Common myeloid progenitor, CD34-positive (primary cell): ENCODE measurements at regions of chr18 and their contacts with region 1.

Region 1: GRCh38 chr18:11518788-11519685 is 90.4 kb upstream of the SLC35G4 start:
- DNase-seq: peak; percentile 61 to 80 (median 79)
- H3K4me3 ChIP-seq: no peak overlapping the region
- H3K27ac ChIP-seq: no peak overlapping the region
- H3K4me1 ChIP-seq: no peaks in the 10 kb centered on the region
- H3K27me3 ChIP-seq: peaks cover 0 to 5% (median 0%) of the 10 kb centered on the region in 5 experiments

Region 2: DNA sequence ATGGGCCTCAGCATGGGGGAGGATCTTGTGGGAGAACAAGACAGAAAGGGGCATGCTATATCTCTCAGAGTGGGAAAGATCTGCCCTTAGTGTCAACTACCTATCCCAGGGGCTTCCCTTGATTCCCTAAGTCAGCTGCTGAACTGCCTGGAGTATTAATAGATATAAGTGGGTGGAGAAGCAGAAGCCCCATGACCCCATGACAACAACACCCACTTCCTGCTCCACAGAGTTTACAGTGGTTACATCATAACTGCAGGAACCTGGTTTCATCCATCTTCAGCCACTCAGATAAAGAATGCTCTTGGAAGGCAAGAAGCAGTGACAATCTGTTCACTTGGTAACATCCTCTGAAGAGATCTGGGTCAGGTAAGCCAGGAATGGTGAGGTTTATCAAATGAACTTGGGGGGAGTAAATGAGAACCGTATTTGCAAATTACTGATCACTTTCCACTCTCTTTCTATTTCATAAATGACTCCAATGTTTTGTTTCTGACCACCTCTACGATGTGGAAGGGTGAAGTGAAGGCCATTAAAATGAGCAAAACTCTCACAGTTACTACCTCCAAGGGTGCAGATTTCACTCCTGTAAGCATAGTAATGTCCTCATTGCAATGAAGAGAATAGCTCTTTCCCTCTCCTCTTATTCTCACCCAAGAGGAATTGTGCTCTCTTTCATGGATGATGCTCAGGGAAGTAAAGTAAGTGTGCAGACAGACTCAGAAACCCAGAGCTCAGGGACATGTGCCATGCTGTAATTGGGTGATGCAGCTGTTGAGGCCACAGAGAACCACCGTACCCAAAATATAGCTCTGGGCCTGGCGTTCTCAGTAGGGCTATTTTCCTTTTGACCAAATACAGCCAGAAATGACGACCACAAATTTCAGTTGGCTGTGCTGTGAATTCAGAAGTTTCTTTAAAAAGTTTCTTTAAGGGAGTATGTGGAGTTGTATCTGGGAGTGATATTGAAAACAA is 1257.4 kb before region 1 on chr18:
- CTCF ChIA-PET with region 1: no interaction called
- POLR2A ChIA-PET with region 1: no interaction called
- DNase-seq: no peak
- H3K4me3 ChIP-seq: no peak overlapping the region
- H3K27ac ChIP-seq: no peak overlapping the region
- H3K4me1 ChIP-seq: peaks cover 0 to 23% (median 5%) of the 10 kb centered on the region in 4 experiments
- H3K27me3 ChIP-seq: no peaks in the 10 kb centered on the region

Region 3: GRCh38 chr18:10989486-10989885 is 529.6 kb before region 1 on chr18:
- CTCF ChIA-PET with region 1: no interaction called
- POLR2A ChIA-PET with region 1: no interaction called
- DNase-seq: no peak
- H3K4me3 ChIP-seq: no peak overlapping the region
- H3K27ac ChIP-seq: no peak overlapping the region
- H3K4me1 ChIP-seq: no peaks in the 10 kb centered on the region
- H3K27me3 ChIP-seq: no peaks in the 10 kb centered on the region

Region 4: GRCh38 chr18:11310476-11311086 is 208.5 kb before region 1 on chr18:
- CTCF ChIA-PET with region 1: interaction called, 17 read pairs
- POLR2A ChIA-PET with region 1: no interaction called
- DNase-seq: peak; percentile 42 to 65 (median 55)
- H3K4me3 ChIP-seq: no peak overlapping the region
- H3K27ac ChIP-seq: no peak overlapping the region
- H3K4me1 ChIP-seq: peaks cover 0 to 4% (median 0%) of the 10 kb centered on the region in 4 experiments
- H3K27me3 ChIP-seq: no peaks in the 10 kb centered on the region